Aorta (tissue), 5 donors: ENCODE measurements at regions of chr2 and their contacts with region 1.

Region 1: GRCh38 chr2:27798948-27799645 is 27.6 kb downstream of the MRPL33 start:
- DNase-seq: peak; percentile 87 to 88
- ATAC-seq: peak; percentile 82
- H3K4me3 ChIP-seq: no peak overlapping the region
- H3K27ac ChIP-seq: peak overlapping the region; percentile 79 to 99
- H3K4me1 ChIP-seq: peaks cover 6 to 21% of the 10 kb centered on the region in 2 donors
- H3K27me3 ChIP-seq: no peaks in the 10 kb centered on the region

Region 2: GRCh38 chr2:27715318-27716210 is 83.5 kb before region 1 on chr2:
- intact Hi-C with region 1: loop called (anchors 5 kb)
- DNase-seq: peak; percentile 82 to 93
- ATAC-seq: peak; percentile 88
- H3K4me3 ChIP-seq: peak overlapping the region in 1 of 2 donors; percentile 4
- H3K27ac ChIP-seq: peak overlapping the region; percentile 91 to 95
- H3K4me1 ChIP-seq: peaks cover 8 to 10% of the 10 kb centered on the region in 2 donors
- H3K27me3 ChIP-seq: no peaks in the 10 kb centered on the region

Region 3: GRCh38 chr2:27723372-27724144 is 75.5 kb before region 1 on chr2:
- intact Hi-C with region 1: loop called (anchors 5 kb)
- DNase-seq: peak; percentile 79 to 83
- ATAC-seq: peak; percentile 78
- H3K4me3 ChIP-seq: no peak overlapping the region
- H3K27ac ChIP-seq: peak overlapping the region; percentile 95 to 97
- H3K4me1 ChIP-seq: peaks cover 2 to 6% of the 10 kb centered on the region in 2 donors
- H3K27me3 ChIP-seq: no peaks in the 10 kb centered on the region

Region 4: DNA sequence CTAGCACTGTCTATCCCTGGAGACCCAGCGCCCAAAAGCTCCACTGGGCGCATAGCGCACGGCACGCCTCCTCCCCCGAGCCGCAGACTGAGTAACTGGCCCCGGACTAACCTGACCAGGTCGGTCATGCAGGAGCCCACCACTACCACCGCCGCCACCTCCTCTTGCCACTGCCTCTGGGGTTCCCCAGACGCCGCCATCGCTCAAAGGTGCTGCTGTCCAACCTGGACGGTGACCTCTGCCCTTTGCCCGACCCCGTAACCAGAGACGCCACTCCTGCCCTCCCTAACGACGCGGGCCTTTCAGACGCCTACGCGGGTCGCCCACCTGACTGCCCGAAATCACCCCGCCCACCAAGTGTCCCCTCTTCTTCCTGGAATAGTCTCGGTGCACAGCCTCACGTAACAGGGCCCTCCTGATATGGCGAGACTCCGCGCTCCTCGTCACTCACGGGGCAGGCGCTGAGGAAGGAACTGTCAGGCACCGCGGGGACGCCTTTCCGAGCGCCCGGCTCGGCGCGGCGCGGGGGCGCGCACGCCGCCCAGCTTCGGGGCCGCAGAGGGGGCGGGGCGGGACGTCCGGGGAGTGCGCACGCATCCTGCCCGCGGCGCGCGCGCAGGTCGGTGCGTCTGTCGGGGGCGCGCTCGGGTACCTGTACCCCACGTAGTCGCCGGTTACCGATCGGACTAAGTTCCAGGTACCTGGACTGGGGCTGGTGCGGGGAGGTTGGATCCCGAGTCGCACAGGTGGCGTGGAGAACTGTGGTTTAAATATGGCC is 91.2 kb after region 1 on chr2 and contains the starts of genes BABAM2 and RBKS:
- intact Hi-C with region 1: loop called in 1 of 2 experiments (anchors 5 kb)
- DNase-seq: peak; percentile 91 to 96
- ATAC-seq: peak; percentile 97
- H3K4me3 ChIP-seq: peak within 1 kb of the TSS; percentile 58 to 77
- H3K27ac ChIP-seq: peak within 1 kb of the TSS; percentile 23 to 87
- H3K4me1 ChIP-seq: peaks cover 0 to under 1% of the 10 kb centered on the region in 2 donors
- H3K27me3 ChIP-seq: no peaks in the 10 kb centered on the region
- total RNA-seq, gene BABAM2: 52.3 to 53.8 TPM
- total RNA-seq, gene RBKS: 4.4 to 4.7 TPM